Activated CD4-positive, alpha-beta memory T cell treated with anti-CD3 and anti-CD28 coated beads for 36 hours (primary cell): ENCODE measurements at regions of chr3 and their contacts with region 1.

Region 1: GRCh38 chr3:188914552-188914951 is 257.2 kb upstream of the TPRG1 start:
- DNase-seq: peak; percentile 23
- H3K4me3 Mint-ChIP-seq: no peak overlapping the region
- H3K27ac Mint-ChIP-seq: peak overlapping the region; percentile 86
- H3K4me1 Mint-ChIP-seq: peaks cover 43% of the 10 kb centered on the region
- H3K27me3 Mint-ChIP-seq: no peaks in the 10 kb centered on the region

Region 2: DNA sequence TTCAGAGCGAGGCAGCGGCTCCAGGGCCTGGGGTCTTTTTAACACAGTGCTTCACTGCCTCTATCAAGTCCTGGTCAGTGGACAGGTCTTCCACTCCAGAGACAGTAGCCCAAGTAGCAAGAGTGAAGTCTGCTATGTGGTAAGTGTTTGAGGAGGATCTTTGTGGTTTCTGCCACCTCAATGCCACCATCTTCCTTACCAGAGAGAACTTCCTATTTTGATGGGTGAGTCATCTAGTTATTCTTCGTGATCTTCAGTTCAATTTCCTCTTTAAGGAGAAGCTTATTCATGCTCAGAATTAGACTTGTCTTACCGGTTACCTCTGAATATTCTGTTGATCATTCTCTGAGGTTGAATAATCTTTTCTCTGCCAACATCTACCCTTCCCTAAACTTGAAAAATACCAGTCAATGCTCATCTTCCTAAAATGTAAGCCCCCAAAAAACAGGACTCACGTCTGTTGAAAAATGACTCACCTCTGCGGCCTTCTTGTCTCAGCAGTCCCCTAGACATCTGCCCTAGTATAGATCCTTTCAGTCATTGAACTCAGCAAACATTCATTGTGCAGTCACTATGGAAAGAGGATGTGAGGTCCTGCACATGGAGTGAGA is 1137.1 kb before region 1 on chr3:
- CTCF ChIA-PET with region 1: no interaction called
- POLR2A ChIA-PET with region 1: no interaction called
- intact Hi-C with region 1: loop called (anchors 10 kb)
- DNase-seq: peak; percentile 72
- H3K4me3 Mint-ChIP-seq: peak overlapping the region; percentile 21
- H3K27ac Mint-ChIP-seq: peak overlapping the region; percentile 91
- H3K4me1 Mint-ChIP-seq: peaks cover 50% of the 10 kb centered on the region
- H3K27me3 Mint-ChIP-seq: no peaks in the 10 kb centered on the region

Region 3: DNA sequence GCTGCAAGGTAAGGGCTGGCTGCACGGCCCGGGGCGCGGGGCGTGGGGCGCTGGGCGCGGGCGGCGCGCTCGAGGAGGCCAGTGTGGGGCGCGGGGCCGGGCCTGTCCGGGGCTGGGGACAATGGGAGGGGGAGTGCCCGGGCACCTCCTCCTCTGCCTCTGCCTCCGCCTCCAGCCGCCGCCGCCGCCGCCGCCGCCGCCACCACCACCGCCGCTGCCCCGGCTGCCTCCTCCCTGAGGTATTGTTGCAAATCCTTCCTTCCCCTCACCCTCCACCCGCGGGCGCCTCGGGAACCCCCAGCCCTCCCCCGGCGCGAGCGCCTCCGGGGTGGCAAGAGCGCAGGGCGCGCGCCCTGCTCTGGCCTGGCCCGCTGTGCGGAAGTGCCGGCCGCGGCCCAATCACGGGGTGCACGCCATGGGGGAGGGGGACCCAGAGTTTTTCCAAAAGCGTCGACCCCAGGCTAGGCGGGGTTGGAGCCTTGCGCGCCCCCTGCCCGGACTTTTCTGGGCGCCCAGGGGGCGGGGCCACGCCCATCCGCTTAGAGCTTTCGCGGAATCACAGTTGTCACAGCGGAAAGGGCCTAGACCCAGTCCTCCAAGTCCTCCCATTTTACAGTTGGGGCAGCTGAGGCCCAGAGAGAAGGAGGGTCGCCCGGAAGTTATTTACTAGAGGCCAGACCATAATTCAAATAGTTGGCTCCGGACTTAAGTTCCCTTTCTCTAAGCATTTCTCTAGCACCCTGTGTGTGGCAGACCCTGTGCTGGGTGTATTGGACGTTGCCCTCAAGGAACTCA is 760.3 kb before region 1 on chr3 and contains the start of gene LPP:
- CTCF ChIA-PET with region 1: no interaction called
- POLR2A ChIA-PET with region 1: no interaction called
- intact Hi-C with region 1: loop called (anchors 10 kb)
- DNase-seq: peak; percentile 91
- H3K4me3 Mint-ChIP-seq: peak within 1 kb of the TSS; percentile 88
- H3K27ac Mint-ChIP-seq: peak within 1 kb of the TSS; percentile 97
- H3K4me1 Mint-ChIP-seq: peaks cover 63% of the 10 kb centered on the region
- H3K27me3 Mint-ChIP-seq: no peaks in the 10 kb centered on the region
- total RNA-seq, gene LPP: 41.0 to 43.6 TPM

Region 4: GRCh38 chr3:188339410-188340295 is 574.9 kb before region 1 on chr3:
- CTCF ChIA-PET with region 1: no interaction called
- POLR2A ChIA-PET with region 1: interaction called, 3 read pairs
- intact Hi-C with region 1: loop called (anchors 1 kb)
- DNase-seq: peak; percentile 75
- H3K4me3 Mint-ChIP-seq: peak overlapping the region; percentile 68
- H3K27ac Mint-ChIP-seq: peak overlapping the region; percentile 93
- H3K4me1 Mint-ChIP-seq: peaks cover 44% of the 10 kb centered on the region
- H3K27me3 Mint-ChIP-seq: peaks cover 2% of the 10 kb centered on the region

Region 5: DNA sequence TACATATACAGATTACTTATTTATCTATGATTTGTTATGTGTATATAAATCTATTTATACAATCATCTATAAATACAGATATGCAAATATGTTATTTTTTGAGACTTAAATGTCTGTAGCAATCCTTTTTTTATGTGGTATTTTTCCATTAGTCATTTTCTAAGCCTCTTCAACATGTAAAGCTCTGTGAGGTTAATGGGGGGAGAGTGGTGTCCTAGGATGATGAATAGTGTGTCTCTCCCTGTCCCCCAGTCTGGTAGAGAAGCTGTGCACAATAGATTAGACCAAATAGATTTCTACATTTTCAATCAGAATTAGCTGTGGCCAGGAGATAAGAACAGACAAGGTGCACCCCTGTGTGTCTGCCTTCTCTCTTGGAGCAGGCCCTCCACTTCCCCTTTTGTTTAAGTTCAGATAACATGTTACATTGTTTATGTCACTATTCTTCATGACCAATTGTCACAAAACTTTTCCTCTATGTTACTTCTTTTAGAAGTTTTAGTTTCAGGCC is 306.7 kb before region 1 on chr3:
- CTCF ChIA-PET with region 1: no interaction called
- POLR2A ChIA-PET with region 1: no interaction called
- intact Hi-C with region 1: no loop called
- DNase-seq: no peak
- H3K4me3 Mint-ChIP-seq: no peak overlapping the region
- H3K27ac Mint-ChIP-seq: no peak overlapping the region
- H3K4me1 Mint-ChIP-seq: no peaks in the 10 kb centered on the region
- H3K27me3 Mint-ChIP-seq: no peaks in the 10 kb centered on the region

Region 6: DNA sequence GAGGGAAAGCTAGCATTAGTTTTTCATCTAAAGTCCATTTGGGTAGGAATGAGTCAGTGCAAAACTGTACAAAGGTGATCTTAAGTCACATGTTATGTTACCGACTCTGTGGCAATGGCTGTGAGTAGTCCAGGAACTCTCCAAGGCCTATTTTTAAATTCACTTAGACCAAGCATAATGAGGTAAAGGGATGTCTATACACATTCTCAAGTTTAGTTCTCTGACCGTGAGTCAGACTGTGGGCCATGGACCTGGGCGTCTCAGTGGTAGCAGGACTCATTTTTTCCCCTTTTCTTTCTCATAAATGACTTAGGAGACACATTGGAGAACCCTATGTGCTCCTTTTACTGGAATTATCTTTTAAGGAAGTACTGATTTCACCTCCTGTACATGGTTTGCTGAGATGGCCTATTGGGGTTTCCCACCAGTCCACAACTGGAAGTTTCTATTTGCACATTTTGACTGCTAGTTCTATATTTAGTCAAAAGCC is 231.5 kb before region 1 on chr3:
- CTCF ChIA-PET with region 1: no interaction called
- POLR2A ChIA-PET with region 1: interaction called, 3 read pairs
- intact Hi-C with region 1: loop called (anchors 1 kb)
- DNase-seq: peak; percentile 74
- H3K4me3 Mint-ChIP-seq: no peak overlapping the region
- H3K27ac Mint-ChIP-seq: peak overlapping the region; percentile 40
- H3K4me1 Mint-ChIP-seq: peaks cover 41% of the 10 kb centered on the region
- H3K27me3 Mint-ChIP-seq: no peaks in the 10 kb centered on the region

Region 7: DNA sequence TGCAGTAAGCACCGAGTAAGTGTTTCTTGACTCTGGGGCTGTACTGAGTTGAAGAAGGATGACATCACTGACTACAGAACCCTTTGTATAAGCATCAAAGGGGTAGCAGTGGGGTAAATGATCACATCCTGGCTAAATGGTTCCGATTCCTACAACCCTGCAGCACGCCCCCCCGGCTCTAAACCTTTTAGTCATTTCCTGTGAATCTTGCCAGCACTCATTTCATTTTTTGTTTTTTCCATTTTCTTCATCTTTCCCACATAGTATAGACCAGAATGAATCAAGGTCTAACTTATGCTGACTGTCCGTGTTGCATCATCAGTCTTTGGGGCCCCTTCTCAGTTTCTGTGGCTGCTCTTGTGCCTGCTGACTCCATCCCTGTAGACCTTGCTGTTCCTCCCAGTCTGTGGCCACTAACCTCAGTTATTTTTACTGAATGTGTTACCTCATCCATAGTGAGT is 125.9 kb before region 1 on chr3:
- CTCF ChIA-PET with region 1: no interaction called
- POLR2A ChIA-PET with region 1: interaction called, 11 read pairs
- intact Hi-C with region 1: loop called (anchors 1 kb)
- DNase-seq: peak; percentile 88
- H3K4me3 Mint-ChIP-seq: no peak overlapping the region
- H3K27ac Mint-ChIP-seq: no peak overlapping the region
- H3K4me1 Mint-ChIP-seq: peaks cover 2% of the 10 kb centered on the region
- H3K27me3 Mint-ChIP-seq: no peaks in the 10 kb centered on the region

Region 8: DNA sequence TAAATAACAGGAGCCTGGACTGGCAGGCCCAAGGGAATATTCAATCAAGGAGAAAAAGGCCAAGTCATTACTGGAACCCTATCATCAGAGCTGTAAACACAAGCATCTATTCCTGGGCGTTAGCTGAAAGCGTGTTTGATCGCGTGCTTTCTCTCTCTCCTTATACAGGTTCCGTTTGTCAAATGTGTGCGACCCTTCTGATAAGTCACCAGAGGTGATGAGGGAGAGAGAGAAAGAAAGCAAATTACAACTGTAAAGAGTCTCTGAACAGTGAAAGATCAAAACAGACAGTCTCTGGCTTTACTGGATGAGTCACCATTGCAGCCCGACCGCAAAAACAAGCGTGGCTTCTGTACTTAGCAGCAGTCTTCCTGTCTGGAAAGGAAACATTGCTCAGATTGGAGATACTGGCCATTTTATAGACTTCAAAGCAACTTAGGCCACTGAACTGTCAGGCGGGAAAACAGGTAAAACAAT is 217.7 kb after region 1 on chr3:
- CTCF ChIA-PET with region 1: no interaction called
- POLR2A ChIA-PET with region 1: no interaction called
- intact Hi-C with region 1: loop called (anchors 2 kb)
- DNase-seq: peak; percentile 90
- H3K4me3 Mint-ChIP-seq: peak overlapping the region; percentile 50
- H3K27ac Mint-ChIP-seq: peak overlapping the region; percentile 83
- H3K4me1 Mint-ChIP-seq: peaks cover 26% of the 10 kb centered on the region
- H3K27me3 Mint-ChIP-seq: no peaks in the 10 kb centered on the region